ENCODE measurements at regions of chr11 and their contacts with region 1.

Region 1: DNA sequence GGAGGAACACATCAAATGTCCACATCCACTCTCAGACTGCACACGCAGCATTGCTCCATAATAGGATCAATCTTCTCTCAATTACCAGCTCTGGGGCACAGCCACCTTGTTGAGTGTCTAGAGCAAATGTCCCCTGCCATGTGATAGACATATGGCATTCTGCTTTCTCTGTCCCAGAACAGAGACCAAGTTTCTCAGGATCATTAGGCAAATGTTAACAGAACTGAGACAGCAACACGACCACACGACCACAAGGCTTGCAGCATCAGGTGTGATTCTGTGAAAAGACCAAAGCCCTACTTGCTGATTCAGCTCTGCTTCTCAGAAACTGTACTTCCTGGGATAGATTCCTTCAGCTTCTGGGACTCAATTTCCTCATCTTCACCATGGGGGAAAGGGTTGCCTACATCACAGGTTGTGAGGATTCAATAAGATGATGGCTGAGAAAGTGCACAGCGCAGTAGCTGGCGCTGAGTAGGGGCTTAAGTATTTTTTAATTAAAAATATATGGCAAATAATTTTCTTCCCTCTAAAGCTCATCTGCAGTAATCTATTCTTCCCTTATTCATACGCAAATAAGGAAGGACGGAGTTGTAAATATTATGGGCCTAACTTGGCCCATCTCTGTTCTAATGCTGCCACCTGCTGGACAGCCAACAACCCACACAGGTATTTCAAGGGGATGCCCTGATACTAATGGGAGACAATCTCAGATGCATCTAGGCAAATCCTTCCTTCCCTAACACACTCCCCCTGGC is 54.3 kb upstream of the USP47 start:
- DNase-seq: peak; percentile 70
- ATAC-seq: peak; percentile 96
- H3K4me3 ChIP-seq: no peak overlapping the region
- H3K27ac ChIP-seq: no peak overlapping the region
- H3K4me1 ChIP-seq: no peaks in the 10 kb centered on the region
- H3K27me3 ChIP-seq: peaks cover 13% of the 10 kb centered on the region
- CTCF ChIP-seq: peak; percentile 94
- POLR2A ChIP-seq: no peak
- RAD21 ChIP-seq: peak; percentile 95

Region 2: DNA sequence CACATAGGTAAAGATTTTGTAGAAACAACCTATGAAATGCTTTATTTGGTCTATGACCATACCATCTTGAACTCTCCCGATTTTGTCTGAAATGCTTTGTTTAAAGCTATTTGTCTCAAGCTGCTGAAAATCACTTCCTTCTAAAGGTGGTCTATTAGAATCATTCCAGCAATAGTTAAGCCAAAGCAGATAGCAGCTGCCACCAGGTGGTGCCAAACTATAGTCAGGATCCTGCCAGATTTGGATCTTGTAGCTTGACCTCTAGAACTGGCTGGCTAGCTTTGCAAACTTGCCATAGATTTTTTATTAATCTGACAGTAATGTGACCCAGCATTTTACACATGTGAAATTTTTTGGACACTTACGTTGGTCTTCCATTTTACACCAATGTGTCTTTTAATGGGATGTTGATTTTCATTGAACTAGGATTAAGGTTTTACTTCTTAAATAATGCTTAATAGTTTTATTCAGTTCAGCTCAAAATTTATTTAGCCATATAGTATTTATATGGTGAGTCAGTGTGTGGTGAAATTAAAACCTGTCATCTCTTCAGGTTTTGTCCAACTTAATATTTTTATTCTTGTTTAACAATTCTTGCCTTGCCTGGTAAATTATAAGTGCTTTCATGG is 1016.7 kb before region 1 on chr11:
- CTCF ChIA-PET with region 1: interaction called, 12 read pairs
- POLR2A ChIA-PET with region 1: no interaction called
- dilution Hi-C with region 1: no loop called
- in situ Hi-C with region 1: no loop called
- intact Hi-C with region 1: loop called (anchors 1 kb)
- DNase-seq: peak; percentile 55
- ATAC-seq: peak; percentile 73
- H3K4me3 ChIP-seq: no peak overlapping the region
- H3K27ac ChIP-seq: no peak overlapping the region
- H3K4me1 ChIP-seq: peaks cover 3% of the 10 kb centered on the region; the same call in 1 of the 2 replicates
- H3K27me3 ChIP-seq: no peaks in the 10 kb centered on the region
- CTCF ChIP-seq: peak; percentile 65
- POLR2A ChIP-seq: no peak
- RAD21 ChIP-seq: peak; percentile 57

Region 3: GRCh38 chr11:10857709-10858438 is 929.6 kb before region 1 on chr11 and contains the start of gene ZBED5:
- CTCF ChIA-PET with region 1: interaction called, 3 read pairs
- POLR2A ChIA-PET with region 1: no interaction called
- dilution Hi-C with region 1: no loop called
- in situ Hi-C with region 1: no loop called
- intact Hi-C with region 1: loop called (anchors 5 kb)
- DNase-seq: peak; percentile 97
- ATAC-seq: peak; percentile 95
- H3K4me3 ChIP-seq: peak within 1 kb of the TSS; percentile 67
- H3K27ac ChIP-seq: peak within 1 kb of the TSS; percentile 95
- H3K4me1 ChIP-seq: no peaks in the 10 kb centered on the region
- H3K27me3 ChIP-seq: no peaks in the 10 kb centered on the region
- CTCF ChIP-seq: 0 out of 2 replicates have a peak, but pooled peaks have one; percentile 7
- POLR2A ChIP-seq: peak; percentile 92
- RAD21 ChIP-seq: peak; percentile 31
- total RNA-seq, gene ZBED5: 30.8 and 35.6 TPM in 2 replicates

Region 4: DNA sequence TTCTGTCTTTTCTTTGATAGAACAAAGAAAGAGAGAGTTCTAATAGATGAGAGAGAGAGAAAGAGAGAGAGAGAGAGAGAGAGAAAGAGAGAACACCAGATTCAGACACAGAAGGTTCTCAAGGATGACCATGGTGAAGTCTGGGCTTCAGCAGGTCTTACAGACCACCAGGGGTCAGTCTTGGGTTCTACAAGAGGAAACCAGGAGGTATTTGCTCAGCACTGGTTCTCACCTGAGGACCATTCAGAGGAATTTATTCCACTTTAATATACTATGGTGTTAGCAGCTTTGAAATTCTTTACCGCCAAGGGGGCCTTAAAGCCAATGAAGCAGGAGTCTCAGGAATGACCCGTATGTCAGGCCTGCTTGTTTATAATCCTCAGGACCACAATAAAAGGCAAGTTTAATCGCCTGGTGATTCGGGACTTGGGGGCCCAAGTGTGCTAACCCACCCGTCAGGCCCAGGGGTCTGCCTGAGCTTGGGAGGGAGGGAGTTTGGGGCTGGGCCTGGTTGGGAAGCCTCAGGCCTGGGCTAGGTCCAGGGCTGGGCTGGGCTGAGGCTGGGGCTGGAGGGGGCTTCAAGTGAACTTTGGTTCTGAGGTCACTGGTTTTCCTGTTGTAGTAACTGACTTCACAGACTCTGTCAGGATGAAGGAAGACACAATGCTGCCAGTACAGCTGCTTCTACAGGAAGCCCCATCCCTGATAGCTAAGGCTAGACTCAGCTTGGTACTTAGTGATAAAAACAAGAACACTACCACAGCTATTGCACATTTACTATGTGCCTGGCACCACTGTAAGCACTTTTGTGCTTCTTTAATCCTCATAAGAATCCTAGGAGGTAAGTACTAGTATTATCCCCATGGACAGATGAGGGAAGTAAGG is 750.4 kb before region 1 on chr11:
- CTCF ChIA-PET with region 1: interaction called, 13 read pairs
- POLR2A ChIA-PET with region 1: no interaction called
- dilution Hi-C with region 1: no loop called
- in situ Hi-C with region 1: no loop called
- intact Hi-C with region 1: no loop called
- DNase-seq: peak; percentile 66
- ATAC-seq: peak; percentile 35; the same call in 1 of the 2 replicates
- H3K4me3 ChIP-seq: no peak overlapping the region
- H3K27ac ChIP-seq: no peak overlapping the region
- H3K4me1 ChIP-seq: peaks cover 17% of the 10 kb centered on the region
- H3K27me3 ChIP-seq: no peaks in the 10 kb centered on the region; the same call in 1 of the 2 replicates
- CTCF ChIP-seq: peak; percentile 57
- POLR2A ChIP-seq: no peak
- RAD21 ChIP-seq: peak; percentile 60

Region 5: GRCh38 chr11:11265994-11266606 is 521.4 kb before region 1 on chr11:
- CTCF ChIA-PET with region 1: no interaction called
- POLR2A ChIA-PET with region 1: no interaction called
- dilution Hi-C with region 1: no loop called
- in situ Hi-C with region 1: no loop called
- intact Hi-C with region 1: loop called (anchors 10 kb)
- DNase-seq: peak; percentile 3
- ATAC-seq: peak; percentile 60
- H3K4me3 ChIP-seq: no peak overlapping the region
- H3K27ac ChIP-seq: no peak overlapping the region
- H3K4me1 ChIP-seq: 0 out of 2 replicates have a peak, but pooled peaks cover 1% of the 10 kb centered on the region
- H3K27me3 ChIP-seq: peaks cover 16% of the 10 kb centered on the region
- CTCF ChIP-seq: peak; percentile 59
- POLR2A ChIP-seq: no peak
- RAD21 ChIP-seq: peak; percentile 47

Region 6: DNA sequence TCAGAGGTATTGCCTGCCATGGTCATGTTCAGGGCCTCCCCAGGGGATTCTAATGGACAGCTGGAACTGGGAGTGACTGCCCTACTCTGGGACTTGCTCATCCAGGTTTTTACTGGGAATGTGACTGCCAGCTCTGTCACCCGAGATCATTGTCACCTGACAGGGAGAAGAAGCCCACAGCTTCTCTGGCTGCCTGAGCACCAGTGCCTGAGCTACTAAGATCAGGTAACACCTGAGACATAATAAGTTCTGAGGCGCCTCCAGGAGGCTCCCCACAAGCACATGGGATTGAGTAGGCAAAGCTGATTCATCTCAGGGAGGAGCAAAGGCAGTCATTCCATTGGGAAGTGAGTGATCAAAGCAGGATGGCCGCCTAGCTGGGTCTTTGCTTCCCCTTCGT is 81.5 kb before region 1 on chr11:
- CTCF ChIA-PET with region 1: no interaction called
- POLR2A ChIA-PET with region 1: no interaction called
- dilution Hi-C with region 1: no loop called
- in situ Hi-C with region 1: no loop called
- intact Hi-C with region 1: no loop called
- DNase-seq: no peak
- ATAC-seq: no peak
- H3K4me3 ChIP-seq: no peak overlapping the region
- H3K27ac ChIP-seq: no peak overlapping the region
- H3K4me1 ChIP-seq: no peaks in the 10 kb centered on the region
- H3K27me3 ChIP-seq: peaks cover 50% of the 10 kb centered on the region
- CTCF ChIP-seq: no peak
- POLR2A ChIP-seq: no peak
- RAD21 ChIP-seq: no peak

Region 7: GRCh38 chr11:11848891-11849746 is 61.6 kb after region 1 on chr11:
- CTCF ChIA-PET with region 1: no interaction called
- POLR2A ChIA-PET with region 1: no interaction called
- dilution Hi-C with region 1: no loop called
- in situ Hi-C with region 1: no loop called
- intact Hi-C with region 1: no loop called
- DNase-seq: peak; percentile 62
- ATAC-seq: no peak; the same call in 1 of the 2 replicates
- H3K4me3 ChIP-seq: no peak overlapping the region
- H3K27ac ChIP-seq: no peak overlapping the region
- H3K4me1 ChIP-seq: peaks cover 15% of the 10 kb centered on the region
- H3K27me3 ChIP-seq: no peaks in the 10 kb centered on the region
- CTCF ChIP-seq: peak; percentile 55
- POLR2A ChIP-seq: no peak
- RAD21 ChIP-seq: 0 out of 2 replicates have a peak, but pooled peaks have one; percentile 32

Region 8: GRCh38 chr11:12052676-12053605 is 265.5 kb after region 1 on chr11:
- CTCF ChIA-PET with region 1: no interaction called
- POLR2A ChIA-PET with region 1: no interaction called
- dilution Hi-C with region 1: no loop called
- in situ Hi-C with region 1: no loop called
- intact Hi-C with region 1: no loop called
- DNase-seq: no peak
- ATAC-seq: no peak
- H3K4me3 ChIP-seq: no peak overlapping the region
- H3K27ac ChIP-seq: no peak overlapping the region
- H3K4me1 ChIP-seq: peaks cover 3% of the 10 kb centered on the region; the same call in 1 of the 2 replicates
- H3K27me3 ChIP-seq: no peaks in the 10 kb centered on the region
- CTCF ChIP-seq: no peak
- POLR2A ChIP-seq: no peak
- RAD21 ChIP-seq: no peak

Measured in IMR-90 (cell line).